Activated CD4-positive, alpha-beta memory T cell treated with anti-CD3 and anti-CD28 coated beads for 36 hours (primary cell): ENCODE measurements at regions of chr10 and their contacts with region 1.

Region 1: GRCh38 chr10:91251430-91252056 is 31.1 kb downstream of the PCGF5 start:
- DNase-seq: peak; percentile 63
- H3K4me3 Mint-ChIP-seq: no peak overlapping the region
- H3K27ac Mint-ChIP-seq: no peak overlapping the region
- H3K4me1 Mint-ChIP-seq: peaks cover 4% of the 10 kb centered on the region
- H3K27me3 Mint-ChIP-seq: no peaks in the 10 kb centered on the region

Region 2: GRCh38 chr10:90999512-91000172 is 251.9 kb before region 1 on chr10:
- CTCF ChIA-PET with region 1: interaction called, 208 read pairs
- POLR2A ChIA-PET with region 1: no interaction called
- intact Hi-C with region 1: no loop called
- DNase-seq: no peak
- H3K4me3 Mint-ChIP-seq: no peak overlapping the region
- H3K27ac Mint-ChIP-seq: no peak overlapping the region
- H3K4me1 Mint-ChIP-seq: no peaks in the 10 kb centered on the region
- H3K27me3 Mint-ChIP-seq: peaks cover 3% of the 10 kb centered on the region

Region 3: DNA sequence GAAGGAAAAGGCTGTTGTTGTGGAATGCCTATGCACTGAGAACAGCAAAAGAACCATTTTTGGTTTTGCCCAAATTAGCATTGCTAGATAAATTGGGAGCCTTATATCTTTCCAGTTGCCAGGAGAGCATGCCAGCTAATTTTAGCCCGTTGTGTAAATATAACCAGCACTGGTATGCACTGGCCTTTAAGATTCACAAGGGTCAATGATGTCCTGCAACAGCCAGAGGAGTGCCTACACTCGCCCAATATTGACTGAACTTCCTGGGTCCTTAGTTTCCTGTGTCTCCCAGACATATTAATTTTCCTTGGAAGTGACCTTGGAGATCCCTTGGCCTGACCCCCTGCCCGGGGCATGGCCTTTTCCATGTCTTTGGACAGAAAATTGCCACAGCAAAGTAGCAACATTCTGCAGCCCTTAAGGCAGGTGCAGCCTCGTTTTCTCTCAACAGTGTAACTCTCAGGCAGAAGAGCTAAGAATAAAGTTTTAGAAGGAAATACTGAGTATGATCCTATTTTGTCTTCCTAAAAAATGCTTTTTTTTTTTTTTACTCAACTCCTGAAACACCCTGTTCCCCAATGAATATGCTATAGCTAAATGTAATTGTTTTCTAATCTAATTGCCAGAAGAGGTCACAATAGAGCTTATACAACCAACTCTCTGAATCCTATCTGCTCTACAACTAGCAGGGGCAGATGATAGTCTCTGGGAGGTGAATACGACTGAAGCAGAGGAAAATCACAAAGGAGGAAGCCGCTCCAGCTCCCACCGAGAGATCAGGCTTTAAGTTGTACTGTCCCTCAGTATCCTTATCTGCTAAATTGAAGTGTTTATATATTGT is 163.0 kb before region 1 on chr10:
- CTCF ChIA-PET with region 1: interaction called, 82 read pairs
- POLR2A ChIA-PET with region 1: no interaction called
- intact Hi-C with region 1: loop called (anchors 1 kb)
- DNase-seq: no peak
- H3K4me3 Mint-ChIP-seq: no peak overlapping the region
- H3K27ac Mint-ChIP-seq: no peak overlapping the region
- H3K4me1 Mint-ChIP-seq: no peaks in the 10 kb centered on the region
- H3K27me3 Mint-ChIP-seq: no peaks in the 10 kb centered on the region

Region 4: DNA sequence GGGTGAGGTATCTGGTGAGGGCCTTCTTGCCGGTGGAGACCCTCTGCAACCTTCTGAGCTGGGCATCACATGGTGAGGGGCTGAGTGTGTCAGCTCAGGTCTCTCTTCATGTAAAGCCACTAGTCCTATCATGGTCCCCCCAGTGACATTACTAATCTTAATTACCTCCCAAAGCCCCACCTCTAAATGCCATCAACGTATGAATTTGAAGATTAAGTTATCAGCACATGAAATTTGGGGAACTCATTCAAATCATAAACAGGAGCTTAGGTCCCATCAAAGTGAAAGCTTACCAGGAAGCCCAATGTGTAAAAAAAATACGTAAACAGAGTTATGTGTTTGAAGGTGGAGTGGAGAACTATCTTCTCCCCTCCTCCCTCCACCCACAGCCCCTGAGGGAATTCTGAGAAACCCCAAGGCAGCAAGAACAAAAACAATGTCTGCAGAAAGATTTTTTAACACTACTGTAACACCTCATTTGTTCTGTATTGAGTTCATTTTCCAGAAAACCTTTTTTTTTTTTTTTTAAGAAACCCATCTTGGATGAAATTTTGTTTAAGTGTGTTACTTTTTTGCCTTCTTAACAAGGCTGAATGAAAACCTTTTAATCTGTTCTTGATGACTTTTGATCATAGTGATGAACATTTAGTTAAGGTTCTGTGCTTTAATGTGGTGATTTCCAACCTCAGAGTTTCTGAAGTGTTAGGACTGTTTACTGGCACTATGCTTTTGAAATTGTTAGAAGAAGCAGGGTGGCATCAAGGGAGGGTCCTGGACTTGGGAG is 50.1 kb before region 1 on chr10:
- CTCF ChIA-PET with region 1: no interaction called
- POLR2A ChIA-PET with region 1: no interaction called
- intact Hi-C with region 1: loop called (anchors 2 kb)
- DNase-seq: peak; percentile 80
- H3K4me3 Mint-ChIP-seq: peak overlapping the region; percentile 49
- H3K27ac Mint-ChIP-seq: peak overlapping the region; percentile 86
- H3K4me1 Mint-ChIP-seq: peaks cover 87% of the 10 kb centered on the region
- H3K27me3 Mint-ChIP-seq: no peaks in the 10 kb centered on the region

Region 5: DNA sequence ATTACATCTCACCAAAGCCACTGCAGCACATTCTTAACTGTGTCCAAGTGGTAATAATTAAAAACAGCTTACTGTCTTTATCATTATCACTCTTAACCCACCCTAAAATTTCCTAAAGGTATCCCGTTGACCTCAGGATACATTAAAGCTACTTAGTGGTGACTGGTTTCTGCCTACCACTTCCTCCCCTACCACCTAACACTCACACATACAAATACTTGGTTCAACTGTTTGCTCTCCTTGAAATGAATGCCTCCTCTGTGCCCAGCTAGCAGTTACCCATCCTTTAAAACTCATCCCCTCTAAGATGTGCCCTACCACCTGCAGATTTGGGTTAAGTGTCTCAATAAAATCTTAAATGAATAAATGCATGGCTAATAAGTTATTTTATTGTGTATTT is 24.0 kb before region 1 on chr10:
- CTCF ChIA-PET with region 1: interaction called, 11 read pairs
- POLR2A ChIA-PET with region 1: no interaction called
- intact Hi-C with region 1: no loop called
- DNase-seq: no peak
- H3K4me3 Mint-ChIP-seq: no peak overlapping the region
- H3K27ac Mint-ChIP-seq: no peak overlapping the region
- H3K4me1 Mint-ChIP-seq: peaks cover 43% of the 10 kb centered on the region
- H3K27me3 Mint-ChIP-seq: no peaks in the 10 kb centered on the region

Region 6: GRCh38 chr10:91367127-91367531 is 115.6 kb after region 1 on chr10:
- CTCF ChIA-PET with region 1: no interaction called
- POLR2A ChIA-PET with region 1: no interaction called
- intact Hi-C with region 1: no loop called
- DNase-seq: peak; percentile 16
- H3K4me3 Mint-ChIP-seq: no peak overlapping the region
- H3K27ac Mint-ChIP-seq: no peak overlapping the region
- H3K4me1 Mint-ChIP-seq: peaks cover 3% of the 10 kb centered on the region
- H3K27me3 Mint-ChIP-seq: peaks cover 44% of the 10 kb centered on the region

Region 7: GRCh38 chr10:91479583-91479982 is 228.0 kb after region 1 on chr10:
- CTCF ChIA-PET with region 1: no interaction called
- POLR2A ChIA-PET with region 1: no interaction called
- intact Hi-C with region 1: no loop called
- DNase-seq: no peak
- H3K4me3 Mint-ChIP-seq: no peak overlapping the region
- H3K27ac Mint-ChIP-seq: no peak overlapping the region
- H3K4me1 Mint-ChIP-seq: no peaks in the 10 kb centered on the region
- H3K27me3 Mint-ChIP-seq: no peaks in the 10 kb centered on the region

Region 8: DNA sequence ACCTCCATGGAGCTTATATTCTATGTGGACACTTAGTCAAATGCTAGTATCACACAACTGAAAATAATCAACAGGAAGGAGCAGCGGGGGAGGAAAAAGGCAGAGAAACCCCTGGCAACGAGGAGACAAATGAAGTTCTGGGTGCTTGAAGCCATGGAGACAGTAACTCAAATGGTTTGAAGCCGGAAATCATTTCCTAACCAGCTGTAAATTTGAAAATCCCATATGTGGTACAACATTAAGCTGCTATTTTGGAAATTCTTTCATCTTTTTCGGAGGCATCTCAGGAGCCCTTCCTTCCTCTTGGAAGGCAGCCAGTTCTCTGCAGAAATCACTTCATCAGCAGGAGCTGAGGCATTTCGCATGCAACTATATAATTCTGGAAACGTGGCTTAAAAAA is 289.9 kb after region 1 on chr10:
- CTCF ChIA-PET with region 1: no interaction called
- POLR2A ChIA-PET with region 1: no interaction called
- intact Hi-C with region 1: no loop called
- DNase-seq: no peak
- H3K4me3 Mint-ChIP-seq: no peak overlapping the region
- H3K27ac Mint-ChIP-seq: no peak overlapping the region
- H3K4me1 Mint-ChIP-seq: no peaks in the 10 kb centered on the region
- H3K27me3 Mint-ChIP-seq: peaks cover 4% of the 10 kb centered on the region